Adrenal gland (tissue), 19 donors: ENCODE measurements at regions of chr13 and their contacts with region 1.

Region 1: DNA sequence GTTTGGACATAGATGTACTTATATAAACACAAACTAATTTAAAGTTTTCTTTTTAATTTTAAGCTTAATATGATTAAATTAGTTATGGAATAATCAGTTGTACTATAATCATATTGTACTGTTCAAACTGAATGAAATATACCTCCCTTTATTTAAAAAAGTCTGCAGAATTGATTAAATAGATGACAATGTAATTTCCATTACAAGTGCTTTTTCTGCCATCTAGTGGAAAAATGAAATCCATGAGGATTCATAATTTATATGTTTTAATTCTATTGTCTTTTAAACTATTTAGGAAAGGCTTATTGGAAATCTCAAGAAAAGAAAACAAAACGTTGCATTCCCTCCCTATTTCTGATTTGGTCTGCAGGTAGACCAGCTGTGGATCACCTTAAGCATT is 30.9 kb downstream of the MZT1 start:
- DNase-seq: no peak
- H3K4me3 ChIP-seq: no peak overlapping the region
- H3K27ac ChIP-seq: no peak overlapping the region
- H3K4me1 ChIP-seq: no peaks in the 10 kb centered on the region
- H3K27me3 ChIP-seq: no peaks in the 10 kb centered on the region
- CTCF ChIP-seq: peak in 5 of 6 experiments; percentile 28 to 62 (median 60)
- POLR2A ChIP-seq: no peak

Region 2: DNA sequence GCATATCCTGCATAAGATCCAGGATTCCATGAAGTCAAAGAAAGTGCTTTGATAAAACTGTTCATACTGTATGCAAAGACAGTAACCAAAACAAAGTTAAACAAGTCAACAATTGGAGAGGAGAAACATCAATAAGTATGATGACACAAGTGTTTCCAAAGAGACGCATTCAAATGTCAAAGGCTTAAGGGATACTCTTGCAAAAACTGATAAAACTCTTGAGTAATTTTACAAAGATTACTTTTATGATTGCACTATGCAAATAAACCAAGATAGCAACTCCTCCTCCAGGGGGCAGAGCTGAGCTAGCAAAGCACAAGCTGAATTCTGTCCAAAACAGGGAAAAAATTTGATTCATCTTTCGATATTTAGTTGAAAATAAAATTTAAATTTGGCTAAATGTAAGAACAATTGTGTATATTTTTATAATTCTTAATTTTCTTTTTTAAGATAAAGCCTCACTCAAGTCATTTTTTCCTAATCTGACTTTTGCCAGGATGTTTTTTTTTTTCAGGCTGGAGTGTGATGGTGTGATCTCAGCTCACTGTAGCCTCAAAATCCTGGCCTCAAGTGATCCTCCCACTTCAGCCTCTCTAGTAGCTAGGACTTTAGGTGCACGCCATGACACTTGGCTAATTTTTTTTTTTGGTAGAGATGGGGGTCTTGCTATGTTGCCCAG is 53.1 kb before region 1 on chr13:
- intact Hi-C with region 1: loop called in 1 of 2 experiments (anchors 10 kb)
- DNase-seq: peak; percentile 69 to 91 (median 82)
- H3K4me3 ChIP-seq: no peak overlapping the region
- H3K27ac ChIP-seq: no peak overlapping the region
- H3K4me1 ChIP-seq: peaks cover 0 to 16% of the 10 kb centered on the region in 2 donors
- H3K27me3 ChIP-seq: no peaks in the 10 kb centered on the region
- CTCF ChIP-seq: peak; percentile 49 to 74 (median 65)
- POLR2A ChIP-seq: no peak

Region 3: GRCh38 chr13:72737033-72737432 is 40.5 kb after region 1 on chr13:
- intact Hi-C with region 1: no loop called
- DNase-seq: no peak
- H3K4me3 ChIP-seq: no peak overlapping the region
- H3K27ac ChIP-seq: no peak overlapping the region
- H3K4me1 ChIP-seq: no peaks in the 10 kb centered on the region
- H3K27me3 ChIP-seq: no peaks in the 10 kb centered on the region
- CTCF ChIP-seq: no peak
- POLR2A ChIP-seq: no peak